Transverse colon (tissue), 4 donors: ENCODE measurements at regions of chr4 and their contacts with region 1.

Region 1: DNA sequence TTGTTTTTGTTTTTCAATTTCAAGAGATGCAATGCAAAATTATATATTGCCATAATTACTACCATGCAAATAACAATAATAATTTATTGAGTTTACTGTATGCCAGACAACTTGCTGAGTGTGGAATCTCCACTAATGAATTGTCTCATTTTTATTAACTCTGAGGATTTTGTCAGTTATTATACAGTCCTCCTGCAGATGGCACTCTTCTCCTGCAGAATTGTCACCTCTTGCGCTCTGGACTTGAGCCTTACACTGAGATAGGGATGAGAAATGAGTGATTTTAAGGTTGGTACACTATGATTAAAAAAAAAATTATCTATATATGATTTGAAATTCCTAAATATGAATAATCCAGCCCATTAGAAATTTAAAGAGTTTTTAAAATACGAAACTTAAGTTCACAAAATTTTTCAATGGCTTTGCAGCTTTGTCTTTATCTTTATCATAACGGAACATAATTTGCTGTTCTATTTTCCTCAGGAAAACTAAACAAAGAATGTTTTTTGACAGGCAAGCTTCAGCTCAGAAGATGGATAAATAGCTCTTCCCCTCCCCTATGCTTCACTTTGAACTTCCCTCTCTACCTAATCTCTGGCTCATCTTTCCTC is 12.7 kb upstream of the PAQR3 start:
- DNase-seq: no peak
- H3K4me3 ChIP-seq: no peak overlapping the region
- H3K27ac ChIP-seq: no peak overlapping the region
- H3K4me1 ChIP-seq: no peaks in the 10 kb centered on the region
- H3K27me3 ChIP-seq: no peaks in the 10 kb centered on the region
- CTCF ChIP-seq: peak; percentile 65 to 78 (median 69)
- EP300 ChIP-seq: no peak
- POLR2A ChIP-seq: no peak

Region 2: DNA sequence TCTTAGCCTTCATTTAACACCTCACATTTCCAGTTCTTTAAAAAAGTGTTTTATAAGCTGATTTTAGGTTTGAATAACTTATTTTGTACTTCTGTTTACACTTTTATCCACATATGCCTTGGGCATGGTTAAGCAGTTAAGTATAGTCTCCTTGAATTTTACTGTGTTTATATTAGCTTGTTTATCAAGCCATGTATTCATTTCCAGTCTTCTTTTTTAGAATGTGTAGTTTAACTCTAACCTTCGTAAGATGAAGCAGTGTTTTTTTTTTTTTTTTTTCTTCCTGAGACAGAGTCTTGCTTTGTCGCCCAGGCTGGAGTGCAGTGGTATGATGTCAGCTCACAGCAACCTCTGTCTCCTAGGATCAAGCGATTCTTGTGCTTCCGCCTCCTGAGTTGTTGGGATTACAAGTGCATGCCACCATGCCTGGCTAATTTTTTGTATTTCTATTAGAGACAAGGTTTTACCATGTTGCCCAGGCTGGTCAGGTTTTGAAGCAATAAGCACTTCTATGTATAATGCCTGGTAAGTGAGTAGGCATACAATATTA is 133.4 kb before region 1 on chr4:
- in situ Hi-C with region 1: no loop called
- intact Hi-C with region 1: no loop called
- DNase-seq: no peak
- H3K4me3 ChIP-seq: no peak overlapping the region
- H3K27ac ChIP-seq: no peak overlapping the region
- H3K4me1 ChIP-seq: no peaks in the 10 kb centered on the region
- H3K27me3 ChIP-seq: no peaks in the 10 kb centered on the region
- CTCF ChIP-seq: no peak
- EP300 ChIP-seq: no peak
- POLR2A ChIP-seq: no peak

Region 3: GRCh38 chr4:80215449-80216052 is 1263.6 kb after region 1 on chr4:
- in situ Hi-C with region 1: loop called (anchors 10 to 25 kb)
- intact Hi-C with region 1: loop called (anchors 5 kb)
- DNase-seq: no peak
- H3K4me3 ChIP-seq: no peak overlapping the region
- H3K27ac ChIP-seq: no peak overlapping the region
- H3K4me1 ChIP-seq: no peaks in the 10 kb centered on the region
- H3K27me3 ChIP-seq: peaks cover 35% of the 10 kb centered on the region
- CTCF ChIP-seq: peak; percentile 52 to 81 (median 68)
- EP300 ChIP-seq: no peak
- POLR2A ChIP-seq: no peak